Dendritic cell treated with granulocyte-macrophage colony-stimulating factor and Interleukin-4, amounts not matched to agents 40 ng/mL and 50 ng/mL, for 4 days (primary cell): ENCODE measurements at regions of chr20 and their contacts with region 1.

Region 1: GRCh38 chr20:17431621-17432364 is 99.4 kb downstream of the BFSP1 start:
- H3K4me3 Mint-ChIP-seq: no peak overlapping the region
- H3K27ac Mint-ChIP-seq: no peak overlapping the region
- H3K4me1 Mint-ChIP-seq: no peaks in the 10 kb centered on the region
- H3K27me3 Mint-ChIP-seq: peaks cover 4% of the 10 kb centered on the region

Region 2: DNA sequence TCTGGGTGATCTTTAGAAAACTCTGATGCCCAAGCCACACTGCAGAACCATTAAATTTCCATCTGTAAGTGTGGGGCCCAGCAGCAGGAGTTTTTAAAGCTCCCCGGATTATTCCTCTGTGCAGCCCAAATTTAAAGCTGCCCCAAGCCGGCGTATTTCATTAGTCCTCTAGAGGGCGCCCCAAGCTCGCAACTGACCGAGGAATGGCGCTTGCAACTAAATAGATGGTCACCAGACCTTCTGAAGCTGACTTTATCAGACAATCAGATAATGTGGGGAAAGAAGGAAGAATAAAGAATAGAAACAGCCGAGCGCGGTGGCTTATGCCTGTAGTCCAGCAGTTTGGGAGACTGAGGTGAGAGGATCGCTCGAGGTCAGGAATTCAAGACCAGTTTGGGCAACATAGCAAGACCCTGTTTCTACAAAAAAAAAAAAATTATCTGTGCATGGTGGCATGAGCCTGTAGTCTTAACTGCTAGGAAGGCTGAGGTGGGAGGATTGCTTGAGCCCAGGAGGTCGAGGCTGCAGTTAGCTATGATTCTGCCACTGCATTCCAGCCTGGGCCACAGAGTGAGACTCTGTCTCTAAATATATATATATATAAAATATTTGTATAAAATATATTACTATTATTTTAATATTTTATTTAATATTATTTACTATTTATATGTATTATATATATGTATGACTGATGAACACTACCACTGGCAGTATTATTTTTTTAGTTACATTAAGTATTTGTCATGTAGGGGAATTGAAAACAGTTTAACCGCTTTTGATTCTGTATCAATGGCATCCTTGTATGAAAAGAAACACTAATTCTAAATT is 627.6 kb before region 1 on chr20:
- intact Hi-C with region 1: loop called (anchors 1 kb)
- H3K4me3 Mint-ChIP-seq: no peak overlapping the region
- H3K27ac Mint-ChIP-seq: no peak overlapping the region
- H3K4me1 Mint-ChIP-seq: no peaks in the 10 kb centered on the region
- H3K27me3 Mint-ChIP-seq: peaks cover 24% of the 10 kb centered on the region

Region 3: GRCh38 chr20:17129089-17129488 is 302.7 kb before region 1 on chr20:
- intact Hi-C with region 1: no loop called
- H3K4me3 Mint-ChIP-seq: no peak overlapping the region
- H3K27ac Mint-ChIP-seq: no peak overlapping the region
- H3K4me1 Mint-ChIP-seq: no peaks in the 10 kb centered on the region
- H3K27me3 Mint-ChIP-seq: no peaks in the 10 kb centered on the region

Region 4: DNA sequence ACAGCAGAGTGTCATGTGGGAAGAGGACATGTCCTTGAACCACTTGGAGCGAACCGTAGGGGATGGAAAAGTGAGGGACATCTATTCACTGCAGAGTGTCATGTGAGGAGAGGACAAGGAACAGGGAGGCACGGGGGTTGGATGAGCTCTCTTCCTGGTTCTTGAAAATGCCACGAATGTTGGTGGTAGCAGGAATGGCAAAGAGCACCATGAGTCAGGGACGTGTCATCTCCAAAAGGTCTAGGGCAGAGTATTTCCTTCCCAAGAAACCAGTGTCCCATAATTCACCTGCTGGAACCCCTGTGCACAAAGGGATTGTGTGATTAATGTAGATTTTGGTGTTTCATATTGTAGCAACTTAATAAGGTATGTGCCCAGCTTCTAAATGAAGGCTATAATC is 37.4 kb before region 1 on chr20:
- intact Hi-C with region 1: no loop called
- H3K4me3 Mint-ChIP-seq: no peak overlapping the region
- H3K27ac Mint-ChIP-seq: no peak overlapping the region
- H3K4me1 Mint-ChIP-seq: peaks cover 5% of the 10 kb centered on the region
- H3K27me3 Mint-ChIP-seq: no peaks in the 10 kb centered on the region

Region 5: DNA sequence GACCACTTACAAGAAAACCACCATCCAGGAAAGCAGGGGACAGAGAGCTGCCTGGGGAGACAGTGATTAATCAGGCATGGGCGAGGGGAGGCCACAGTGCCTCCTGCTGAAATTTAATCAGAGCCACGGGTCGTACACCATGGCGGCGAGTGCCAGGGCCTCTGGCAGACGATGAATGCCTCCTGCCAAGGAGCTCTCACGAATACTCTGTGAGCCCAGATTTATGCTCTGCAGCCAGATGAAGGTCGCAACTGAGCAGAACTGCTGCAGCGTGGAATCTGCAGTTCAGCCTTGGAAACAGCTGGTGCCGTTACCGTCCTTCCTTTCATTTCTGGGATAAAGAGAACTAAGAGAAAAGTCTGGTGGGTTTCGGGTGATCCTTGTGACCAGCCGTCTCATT is 13.8 kb after region 1 on chr20:
- intact Hi-C with region 1: no loop called
- H3K4me3 Mint-ChIP-seq: no peak overlapping the region
- H3K27ac Mint-ChIP-seq: no peak overlapping the region
- H3K4me1 Mint-ChIP-seq: no peaks in the 10 kb centered on the region
- H3K27me3 Mint-ChIP-seq: no peaks in the 10 kb centered on the region

Region 6: GRCh38 chr20:17471606-17472187 is 39.9 kb after region 1 on chr20:
- intact Hi-C with region 1: no loop called
- H3K4me3 Mint-ChIP-seq: no peak overlapping the region
- H3K27ac Mint-ChIP-seq: no peak overlapping the region
- H3K4me1 Mint-ChIP-seq: no peaks in the 10 kb centered on the region
- H3K27me3 Mint-ChIP-seq: no peaks in the 10 kb centered on the region